ENCODE measurements at regions of chr3 and their contacts with region 1.

Region 1: DNA sequence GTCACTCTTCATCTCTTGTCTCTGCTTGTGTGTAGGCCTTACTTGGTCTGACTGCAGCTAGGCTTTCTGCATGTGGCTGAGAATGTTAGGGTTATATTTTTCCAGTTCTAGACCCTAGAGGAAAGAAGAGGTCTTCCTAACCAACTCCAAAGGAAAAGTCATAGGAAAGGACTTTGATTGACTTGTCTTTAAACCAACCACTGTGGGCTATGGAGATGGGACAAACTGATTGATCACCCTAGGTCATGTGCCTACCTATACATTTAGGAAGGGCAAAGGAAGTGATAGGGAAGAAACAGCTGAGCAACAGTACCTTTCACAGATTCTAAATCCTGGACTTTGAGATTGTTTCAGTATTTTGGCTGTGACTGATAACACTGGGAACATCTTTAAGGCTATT is 16.5 kb upstream of the TBC1D23 start:
- DNase-seq: no peak
- H3K4me3 ChIP-seq: no peak overlapping the region
- H3K27ac ChIP-seq: no peak overlapping the region
- H3K4me1 ChIP-seq: no peaks in the 10 kb centered on the region
- H3K27me3 ChIP-seq: no peaks in the 10 kb centered on the region
- CTCF ChIP-seq: no peak
- POLR2A ChIP-seq: no peak

Region 2: DNA sequence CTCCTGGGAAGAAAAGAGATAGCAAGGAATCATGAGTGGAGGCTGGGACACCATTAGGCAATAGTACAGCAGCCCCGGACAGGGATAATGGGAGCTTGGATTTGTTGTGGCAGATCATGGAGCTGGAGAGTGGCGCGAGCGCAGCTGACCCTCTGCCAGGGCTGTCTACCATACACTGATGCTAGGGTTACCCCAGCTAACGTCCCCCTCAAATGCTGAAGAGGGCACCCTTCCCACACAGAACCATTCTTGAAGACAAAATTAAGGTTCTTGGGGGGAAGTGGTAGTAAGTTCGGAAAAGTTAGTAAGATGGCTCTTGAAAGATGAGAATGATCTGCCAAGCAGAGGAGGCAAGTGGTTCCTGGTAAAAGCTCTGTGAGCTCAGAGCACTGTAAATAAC is 1420.0 kb before region 1 on chr3:
- intact Hi-C with region 1: loop called (anchors 5 kb)
- DNase-seq: no peak
- H3K4me3 ChIP-seq: no peak overlapping the region
- H3K27ac ChIP-seq: peak overlapping the region in 1 of 2 donors; percentile 8
- H3K4me1 ChIP-seq: no peaks in the 10 kb centered on the region
- H3K27me3 ChIP-seq: no peaks in the 10 kb centered on the region
- CTCF ChIP-seq: no peak
- POLR2A ChIP-seq: no peak

Region 3: GRCh38 chr3:100254168-100254777 is 10.0 kb after region 1 on chr3:
- intact Hi-C with region 1: no loop called
- DNase-seq: no peak
- H3K4me3 ChIP-seq: no peak overlapping the region
- H3K27ac ChIP-seq: no peak overlapping the region
- H3K4me1 ChIP-seq: no peaks in the 10 kb centered on the region
- H3K27me3 ChIP-seq: no peaks in the 10 kb centered on the region
- CTCF ChIP-seq: peak in 2 of 3 donors; percentile 50 to 56
- POLR2A ChIP-seq: no peak

Region 4: DNA sequence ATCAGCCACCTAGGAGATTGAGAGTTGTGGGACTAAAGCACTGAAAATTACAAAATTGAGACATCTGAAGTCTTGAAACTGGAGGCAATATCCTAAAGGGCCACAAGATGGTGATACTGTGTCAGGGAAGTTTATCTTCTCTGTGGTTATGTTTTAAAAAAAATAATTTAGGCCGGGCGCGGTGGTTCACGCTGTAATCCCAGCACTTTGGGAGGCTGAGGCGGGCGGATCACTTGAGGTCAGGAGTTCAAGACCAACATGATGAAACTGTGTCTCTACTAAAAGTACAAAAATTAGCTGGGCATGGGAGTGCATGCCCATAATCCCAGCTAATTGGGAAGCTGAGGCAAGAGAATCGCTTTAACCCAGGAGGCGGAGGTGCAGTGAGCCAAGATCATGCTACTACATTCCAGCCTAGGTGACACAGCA is 72.4 kb after region 1 on chr3:
- intact Hi-C with region 1: no loop called
- DNase-seq: no peak
- H3K4me3 ChIP-seq: no peak overlapping the region
- H3K27ac ChIP-seq: no peak overlapping the region
- H3K4me1 ChIP-seq: no peaks in the 10 kb centered on the region
- H3K27me3 ChIP-seq: no peaks in the 10 kb centered on the region
- CTCF ChIP-seq: peak; percentile 39 to 78 (median 60)
- POLR2A ChIP-seq: no peak